ENCODE measurements at regions of chr12 and their contacts with region 1.

Region 1: GRCh38 chr12:569803-570434 is 93.3 kb downstream of the NINJ2 start:
- DNase-seq: peak; percentile 98
- H3K4me3 ChIP-seq: peak overlapping the region; percentile 62 to 88
- H3K27ac ChIP-seq: peak overlapping the region; percentile 75 to 76
- H3K4me1 ChIP-seq: peaks cover 0 to 24% of the 10 kb centered on the region in 2 experiments; a peak in 2 of 4 replicates
- H3K27me3 ChIP-seq: no peaks in the 10 kb centered on the region
- CTCF ChIP-seq: peak; percentile 92
- EP300 ChIP-seq: no peak
- RAD21 ChIP-seq: peak; percentile 88

Region 2: GRCh38 chr12:389139-390096 is 180.5 kb before region 1 on chr12 and contains the start of gene KDM5A:
- CTCF ChIA-PET with region 1: no interaction called
- POLR2A ChIA-PET with region 1: no interaction called
- DNase-seq: peak; percentile 91
- H3K4me3 ChIP-seq: peak within 1 kb of the TSS; percentile 85 to 87
- H3K27ac ChIP-seq: peak within 1 kb of the TSS; percentile 97 to 99
- H3K4me1 ChIP-seq: peaks cover 0 to 3% of the 10 kb centered on the region in 2 experiments; a peak in 3 of 4 replicates
- H3K27me3 ChIP-seq: no peaks in the 10 kb centered on the region
- CTCF ChIP-seq: no peak
- EP300 ChIP-seq: peak in 1 of 2 experiments; percentile 42; a peak in 1 of 4 replicates
- RAD21 ChIP-seq: no peak
- polyA plus RNA-seq, gene KDM5A: 6.2 and 8.9 TPM in 2 replicates

Region 3: GRCh38 chr12:585062-586061 is 15.4 kb after region 1 on chr12:
- CTCF ChIA-PET with region 1: interaction called, 19 read pairs
- POLR2A ChIA-PET with region 1: no interaction called
- DNase-seq: no peak
- H3K4me3 ChIP-seq: no peak overlapping the region
- H3K27ac ChIP-seq: no peak overlapping the region
- H3K4me1 ChIP-seq: peaks cover 0 to 10% of the 10 kb centered on the region in 2 experiments; a peak in 1 of 4 replicates
- H3K27me3 ChIP-seq: no peaks in the 10 kb centered on the region
- CTCF ChIP-seq: no peak
- EP300 ChIP-seq: no peak
- RAD21 ChIP-seq: no peak

Region 4: GRCh38 chr12:591167-592023 is 21.5 kb after region 1 on chr12:
- CTCF ChIA-PET with region 1: interaction called, 24 read pairs
- POLR2A ChIA-PET with region 1: no interaction called
- DNase-seq: peak; percentile 89
- H3K4me3 ChIP-seq: no peak overlapping the region; a peak in 1 of 4 replicates
- H3K27ac ChIP-seq: peak overlapping the region in 1 of 2 experiments; percentile 97; a peak in 3 of 4 replicates
- H3K4me1 ChIP-seq: peaks cover 0 to 26% of the 10 kb centered on the region in 2 experiments; a peak in 2 of 4 replicates
- H3K27me3 ChIP-seq: no peaks in the 10 kb centered on the region; the same call in 1 of the 2 replicates
- CTCF ChIP-seq: no peak
- EP300 ChIP-seq: peak in 1 of 2 experiments; percentile 93; a peak in 2 of 4 replicates
- RAD21 ChIP-seq: peak; percentile 39; the same call in 1 of the 2 replicates

Region 5: DNA sequence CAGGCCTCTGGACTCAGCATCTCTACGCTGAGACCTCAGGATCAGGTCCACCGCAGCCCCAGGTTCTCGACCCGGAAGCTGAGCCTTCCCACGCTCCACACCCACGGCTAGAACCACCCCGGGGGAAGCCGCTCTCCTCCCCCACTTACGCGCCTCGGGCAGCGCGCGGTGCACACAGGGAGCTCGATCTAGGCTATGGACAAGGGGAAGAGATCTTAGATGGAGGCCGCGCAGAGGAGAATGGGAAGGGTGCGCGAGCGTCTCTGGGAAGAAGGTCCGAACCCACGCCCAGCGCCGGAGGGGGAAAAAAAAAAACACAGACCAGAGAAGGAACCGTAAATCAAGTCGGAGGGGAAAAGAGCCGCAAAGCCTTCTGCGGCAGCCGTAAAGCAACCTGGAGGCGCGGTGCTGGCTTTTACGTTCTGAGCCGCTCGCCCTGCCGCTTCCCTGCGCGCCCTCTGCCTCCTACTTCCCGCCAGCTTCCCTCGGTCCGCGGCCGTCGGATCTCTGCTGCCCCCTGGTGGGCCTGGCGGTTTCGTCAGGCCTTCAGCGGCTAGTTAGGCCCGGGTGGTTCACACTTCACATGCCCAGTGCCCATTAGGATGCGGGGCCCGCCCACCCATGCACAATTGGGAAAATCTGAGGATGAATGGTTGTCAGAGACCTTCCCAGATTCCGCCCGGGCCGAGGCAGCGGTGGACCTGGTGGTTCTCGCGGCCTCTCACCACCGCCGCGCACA is 379.7 kb after region 1 on chr12 and contains the start of gene RAD52:
- CTCF ChIA-PET with region 1: interaction called, 29 read pairs
- POLR2A ChIA-PET with region 1: interaction called, 3 read pairs
- DNase-seq: peak; percentile 91
- H3K4me3 ChIP-seq: peak within 1 kb of the TSS; percentile 69 to 94
- H3K27ac ChIP-seq: peak within 1 kb of the TSS; percentile 95
- H3K4me1 ChIP-seq: peaks cover 2 to 6% of the 10 kb centered on the region in 2 experiments; a peak in 3 of 4 replicates
- H3K27me3 ChIP-seq: no peaks in the 10 kb centered on the region
- CTCF ChIP-seq: peak; percentile 91
- EP300 ChIP-seq: peak; percentile 18 to 69; a peak in 1 of 4 replicates
- RAD21 ChIP-seq: peak; percentile 79
- polyA plus RNA-seq, gene RAD52: 11.2 and 12.1 TPM in 2 replicates